Activated T-helper 1 cell treated with anti-CD3 and anti-CD28 coated beads, Interleukin-12 subunit alpha, Interleukin-12 subunit beta, Interleukin-2, Interleukin-4 antibody, amounts not matched to agents 30 ng/mL and 10 ng/mL and 1 ng/mL, durations not matched to agents 14 hours and 24 hours and 36 hours (primary cell): ENCODE measurements at regions of chr18 and their contacts with region 1.

Region 1: DNA sequence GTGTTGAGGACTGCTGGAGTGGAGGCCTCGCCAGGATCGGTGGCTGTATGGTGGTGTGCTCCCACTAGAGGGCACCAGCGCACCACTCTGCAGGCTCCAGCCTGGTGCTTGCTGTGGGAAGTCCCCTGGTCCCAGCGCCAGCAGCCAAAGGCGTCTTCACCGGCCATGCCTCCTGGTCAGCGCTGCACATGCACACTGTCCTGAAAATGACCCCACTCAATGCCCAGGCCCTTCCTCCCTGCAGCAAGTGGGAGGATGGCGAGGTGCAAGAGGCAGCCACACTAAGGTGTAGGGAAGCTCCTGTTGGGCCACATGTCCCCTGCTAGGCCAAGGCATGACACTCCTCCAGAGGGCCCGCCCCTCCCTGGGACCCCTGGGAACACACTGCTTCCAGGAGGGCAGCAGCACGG is 136.5 kb downstream of the CTIF start:
- DNase-seq: peak; percentile 74
- H3K4me3 Mint-ChIP-seq: no peak overlapping the region
- H3K27ac Mint-ChIP-seq: no peak overlapping the region
- H3K4me1 Mint-ChIP-seq: no peaks in the 10 kb centered on the region
- H3K27me3 Mint-ChIP-seq: no peaks in the 10 kb centered on the region

Region 2: GRCh38 chr18:48951448-48952286 is 276.3 kb after region 1 on chr18:
- intact Hi-C with region 1: loop called (anchors 1 kb)
- DNase-seq: peak; percentile 68
- H3K4me3 Mint-ChIP-seq: peak overlapping the region; percentile 98
- H3K27ac Mint-ChIP-seq: peak overlapping the region; percentile 96
- H3K4me1 Mint-ChIP-seq: peaks cover 45% of the 10 kb centered on the region
- H3K27me3 Mint-ChIP-seq: peaks cover 14% of the 10 kb centered on the region

Region 3: DNA sequence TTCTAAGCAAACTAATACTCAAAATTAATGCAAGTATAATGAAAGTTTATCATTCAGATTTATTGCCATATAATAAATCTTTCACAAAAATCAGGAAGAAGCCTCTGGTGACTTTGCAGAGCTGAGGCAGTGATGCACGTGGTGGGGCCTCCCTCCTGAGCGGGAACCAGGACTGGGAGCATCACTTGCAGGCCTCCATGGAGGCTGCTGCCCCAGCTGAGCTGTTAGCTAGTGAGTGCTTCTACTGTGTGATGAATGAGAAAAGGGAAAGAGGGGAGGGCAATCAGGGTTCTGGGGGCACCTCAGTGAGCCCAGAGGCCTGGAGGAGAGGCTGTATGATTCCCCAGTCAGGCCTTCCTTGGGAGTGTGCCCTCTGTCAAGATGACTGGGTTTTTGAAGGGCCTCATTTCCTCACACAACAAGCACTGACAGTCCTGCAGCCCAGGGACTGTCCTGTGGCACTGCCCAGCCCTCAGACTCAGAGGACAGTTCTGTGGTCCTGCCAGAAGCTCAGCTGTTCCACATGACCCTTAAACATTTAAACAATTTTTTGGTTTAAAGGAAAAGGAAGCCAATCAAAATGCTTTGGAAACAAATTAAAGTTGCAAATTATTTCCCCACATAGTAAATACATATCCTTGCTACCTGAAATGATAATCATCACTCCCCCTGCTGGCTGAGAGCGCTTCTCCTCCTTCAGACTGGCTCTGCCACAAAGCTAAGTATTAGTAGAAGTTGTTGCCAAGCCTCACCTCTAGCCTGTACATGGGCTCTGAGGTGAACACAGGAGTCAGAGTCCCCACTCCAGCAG is 366.3 kb after region 1 on chr18:
- intact Hi-C with region 1: loop called (anchors 1 kb)
- DNase-seq: no peak
- H3K4me3 Mint-ChIP-seq: no peak overlapping the region
- H3K27ac Mint-ChIP-seq: no peak overlapping the region
- H3K4me1 Mint-ChIP-seq: peaks cover 6% of the 10 kb centered on the region
- H3K27me3 Mint-ChIP-seq: no peaks in the 10 kb centered on the region

Region 4: GRCh38 chr18:49094979-49095632 is 419.7 kb after region 1 on chr18:
- intact Hi-C with region 1: no loop called
- DNase-seq: no peak
- H3K4me3 Mint-ChIP-seq: no peak overlapping the region
- H3K27ac Mint-ChIP-seq: no peak overlapping the region
- H3K4me1 Mint-ChIP-seq: peaks cover 6% of the 10 kb centered on the region
- H3K27me3 Mint-ChIP-seq: no peaks in the 10 kb centered on the region

Region 5: GRCh38 chr18:49335677-49336076 is 660.3 kb after region 1 on chr18:
- intact Hi-C with region 1: loop called (anchors 5 kb)
- DNase-seq: no peak
- H3K4me3 Mint-ChIP-seq: no peak overlapping the region
- H3K27ac Mint-ChIP-seq: no peak overlapping the region
- H3K4me1 Mint-ChIP-seq: no peaks in the 10 kb centered on the region
- H3K27me3 Mint-ChIP-seq: peaks cover 3% of the 10 kb centered on the region

Region 6: GRCh38 chr18:49431165-49431962 is 756.0 kb after region 1 on chr18:
- intact Hi-C with region 1: no loop called
- DNase-seq: no peak
- H3K4me3 Mint-ChIP-seq: no peak overlapping the region
- H3K27ac Mint-ChIP-seq: no peak overlapping the region
- H3K4me1 Mint-ChIP-seq: no peaks in the 10 kb centered on the region
- H3K27me3 Mint-ChIP-seq: no peaks in the 10 kb centered on the region

Region 7: DNA sequence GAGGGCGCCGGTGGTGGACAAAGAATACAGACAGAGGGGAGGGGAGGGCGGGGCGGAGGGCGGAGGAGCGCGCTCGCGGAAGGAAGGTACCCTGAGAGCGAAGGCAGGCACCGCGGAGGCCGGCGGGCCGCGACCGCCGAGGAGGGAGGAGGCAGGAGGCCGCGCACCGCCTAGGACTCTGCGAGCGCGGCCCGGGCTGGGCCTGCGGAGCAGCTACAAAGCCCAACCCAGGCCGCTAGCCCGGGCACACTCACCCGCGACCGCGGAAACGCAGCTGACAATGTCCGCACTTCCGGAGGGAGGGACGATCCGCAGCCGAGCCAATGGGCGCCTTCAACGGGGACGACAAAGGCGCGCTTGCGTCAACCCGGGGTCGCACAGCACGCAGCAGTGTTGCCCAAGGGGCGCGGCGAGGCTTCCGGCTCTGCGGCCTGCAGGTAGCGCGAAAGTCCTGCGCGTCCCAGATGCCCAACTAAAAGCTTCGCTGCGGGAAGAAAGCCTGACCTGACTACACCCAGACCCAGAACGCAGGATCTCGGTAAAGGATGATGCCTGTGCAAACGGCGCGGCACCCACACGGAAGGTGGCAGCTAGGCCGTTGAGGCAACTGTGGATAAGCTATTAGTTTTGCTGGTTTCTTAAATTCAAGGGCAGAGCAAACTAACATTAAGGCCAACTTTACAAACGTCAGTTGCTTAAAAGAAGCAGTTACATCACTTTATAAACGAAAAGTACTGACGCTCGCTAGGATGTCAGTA is 811.8 kb after region 1 on chr18 and contains the start of gene C18orf32:
- intact Hi-C with region 1: loop called (anchors 5 kb)
- DNase-seq: peak; percentile 92
- H3K4me3 Mint-ChIP-seq: peak within 1 kb of the TSS; percentile 93
- H3K27ac Mint-ChIP-seq: peak within 1 kb of the TSS; percentile 98
- H3K4me1 Mint-ChIP-seq: peaks cover 53% of the 10 kb centered on the region
- H3K27me3 Mint-ChIP-seq: no peaks in the 10 kb centered on the region
- total RNA-seq, gene C18orf32: 28.7 and 31.2 TPM in 2 replicates